Activated CD8-positive, alpha-beta memory T cell treated with anti-CD3 and anti-CD28 coated beads, Interleukin-2, amount 10 ng/mL, durations not matched to agents 7 days and 5 days (primary cell): ENCODE measurements at regions of chr3 and their contacts with region 1.

Region 1: GRCh38 chr3:130892759-130893375 is 1.0 kb upstream of the ATP2C1 start:
- DNase-seq: peak; percentile 84
- ATAC-seq: peak; percentile 52
- H3K4me3 Mint-ChIP-seq: peak overlapping the region; percentile 96
- H3K27ac Mint-ChIP-seq: peak overlapping the region; percentile 99
- H3K4me1 Mint-ChIP-seq: peaks cover 34% of the 10 kb centered on the region
- H3K27me3 Mint-ChIP-seq: no peaks in the 10 kb centered on the region

Region 2: GRCh38 chr3:130746246-130747039 is 146.4 kb before region 1 on chr3 and contains the start of gene PIK3R4:
- CTCF ChIA-PET with region 1: interaction called, 22 read pairs
- DNase-seq: peak; percentile 98
- ATAC-seq: peak; percentile 77
- H3K4me3 Mint-ChIP-seq: peak within 1 kb of the TSS; percentile 79
- H3K27ac Mint-ChIP-seq: peak within 1 kb of the TSS; percentile 94
- H3K4me1 Mint-ChIP-seq: peaks cover 51% of the 10 kb centered on the region
- H3K27me3 Mint-ChIP-seq: no peaks in the 10 kb centered on the region
- total RNA-seq, gene PIK3R4: 23.3 to 30.6 TPM

Region 3: GRCh38 chr3:130759699-130760338 is 133.0 kb before region 1 on chr3:
- CTCF ChIA-PET with region 1: interaction called, 21 read pairs
- DNase-seq: peak; percentile 73
- ATAC-seq: peak; percentile 83
- H3K4me3 Mint-ChIP-seq: no peak overlapping the region
- H3K27ac Mint-ChIP-seq: no peak overlapping the region
- H3K4me1 Mint-ChIP-seq: peaks cover 11% of the 10 kb centered on the region
- H3K27me3 Mint-ChIP-seq: peaks cover 3% of the 10 kb centered on the region

Region 4: DNA sequence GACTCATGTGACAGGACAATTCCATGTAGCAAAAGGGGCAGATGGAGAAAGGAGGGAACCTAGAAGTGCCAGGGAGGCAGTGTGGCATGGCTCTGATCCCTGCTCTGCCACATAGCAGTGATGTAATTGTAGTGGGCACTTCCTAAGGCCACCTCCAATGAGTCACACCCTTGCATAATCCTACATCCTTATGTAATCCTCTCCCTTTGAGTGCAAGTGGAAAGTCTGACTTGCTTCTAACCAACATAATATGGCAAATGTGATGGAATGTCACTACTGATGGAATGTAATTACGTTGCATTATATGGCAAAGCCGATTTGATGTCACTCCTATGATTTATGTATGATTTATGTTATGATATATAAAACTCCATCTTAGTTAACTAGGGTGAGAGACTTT is 71.9 kb before region 1 on chr3:
- CTCF ChIA-PET with region 1: no interaction called
- DNase-seq: no peak
- ATAC-seq: no peak
- H3K4me3 Mint-ChIP-seq: no peak overlapping the region
- H3K27ac Mint-ChIP-seq: no peak overlapping the region
- H3K4me1 Mint-ChIP-seq: no peaks in the 10 kb centered on the region
- H3K27me3 Mint-ChIP-seq: peaks cover 40% of the 10 kb centered on the region

Region 5: DNA sequence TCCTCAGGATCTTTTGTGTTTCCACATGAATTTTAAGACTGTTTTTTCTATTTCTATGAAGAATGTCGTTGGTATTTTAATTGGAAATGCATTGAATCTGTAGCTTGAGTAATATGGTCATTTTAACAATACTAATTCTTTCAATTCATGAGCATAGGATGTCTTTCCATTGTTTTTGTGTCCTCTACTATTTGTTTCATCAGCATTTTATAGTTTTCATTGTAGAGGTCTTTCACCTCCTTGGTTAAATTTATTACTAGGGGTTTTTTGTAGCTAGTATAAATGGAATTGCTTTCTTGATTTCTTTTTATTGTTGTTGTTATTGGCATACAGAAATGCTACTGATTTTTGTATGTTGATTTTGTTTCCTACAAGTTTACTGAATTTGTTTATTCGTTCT is 16.3 kb before region 1 on chr3:
- CTCF ChIA-PET with region 1: no interaction called
- DNase-seq: no peak
- ATAC-seq: no peak
- H3K4me3 Mint-ChIP-seq: no peak overlapping the region
- H3K27ac Mint-ChIP-seq: no peak overlapping the region
- H3K4me1 Mint-ChIP-seq: no peaks in the 10 kb centered on the region
- H3K27me3 Mint-ChIP-seq: peaks cover 32% of the 10 kb centered on the region

Region 6: GRCh38 chr3:130929804-130930203 is 36.9 kb after region 1 on chr3:
- CTCF ChIA-PET with region 1: interaction called, 10 read pairs
- DNase-seq: no peak
- ATAC-seq: no peak
- H3K4me3 Mint-ChIP-seq: no peak overlapping the region
- H3K27ac Mint-ChIP-seq: no peak overlapping the region
- H3K4me1 Mint-ChIP-seq: peaks cover 18% of the 10 kb centered on the region
- H3K27me3 Mint-ChIP-seq: no peaks in the 10 kb centered on the region

Region 7: DNA sequence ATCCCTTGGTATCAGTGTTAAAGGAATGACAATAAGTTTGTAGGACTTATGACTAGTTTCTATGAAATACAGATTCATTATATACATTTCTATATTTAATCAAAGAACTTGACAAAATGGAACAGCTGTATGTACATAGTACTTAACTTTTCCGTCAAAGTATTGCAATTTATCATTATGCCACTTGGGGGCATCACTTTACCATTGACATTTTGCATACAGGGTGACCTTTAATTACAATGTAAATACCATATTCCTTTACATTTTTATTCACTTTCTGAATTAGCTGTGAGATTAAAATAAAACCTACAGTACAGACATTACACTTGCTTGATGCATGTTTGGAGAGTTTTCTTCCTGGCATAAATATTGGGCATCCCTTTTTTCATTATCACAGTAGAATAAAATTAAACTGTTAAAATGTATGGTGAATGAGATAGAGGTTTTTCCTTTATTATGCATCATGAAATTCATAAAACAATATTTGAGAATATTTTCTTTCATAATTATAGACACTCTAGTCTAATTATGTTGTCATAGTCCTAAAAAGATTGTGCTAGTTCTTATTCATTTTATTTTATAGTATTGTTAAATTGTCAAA is 140.7 kb after region 1 on chr3:
- CTCF ChIA-PET with region 1: no interaction called
- DNase-seq: no peak
- ATAC-seq: peak; percentile 70
- H3K4me3 Mint-ChIP-seq: no peak overlapping the region
- H3K27ac Mint-ChIP-seq: no peak overlapping the region
- H3K4me1 Mint-ChIP-seq: peaks cover 3% of the 10 kb centered on the region
- H3K27me3 Mint-ChIP-seq: no peaks in the 10 kb centered on the region